AG04449 (cell line): ENCODE measurements at regions of chr7 and their contacts with region 1.

Region 1: DNA sequence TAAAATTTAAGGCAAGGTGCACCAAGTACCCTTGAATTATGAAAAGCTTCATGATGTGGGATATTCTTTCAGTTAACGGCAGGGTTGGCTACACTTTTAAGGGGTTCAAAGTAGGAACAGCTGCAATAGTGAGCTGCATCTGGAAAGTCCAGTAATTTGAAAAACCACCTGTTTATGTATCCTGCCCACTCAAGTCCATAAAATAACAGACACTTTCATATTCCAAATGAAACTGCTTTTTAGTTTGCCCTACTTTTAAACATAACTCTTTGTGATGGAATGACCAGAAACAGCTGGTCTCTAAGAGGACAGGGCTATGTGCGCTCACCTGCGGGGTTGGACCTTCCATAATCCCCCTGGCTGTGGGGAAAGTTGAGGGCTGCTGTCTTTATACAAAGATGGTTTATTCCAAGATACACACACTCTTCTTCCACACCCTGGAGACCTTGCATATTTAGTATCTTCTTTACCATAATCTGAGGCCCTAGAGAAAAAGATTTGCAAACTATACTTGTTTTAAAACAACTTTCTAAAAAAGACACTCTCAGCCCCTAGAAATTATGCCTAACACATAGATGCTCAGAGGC is 7.4 kb downstream of the CAV1 start:
- DNase-seq: no peak
- H3K4me3 ChIP-seq: peak overlapping the region; percentile 18
- CTCF ChIP-seq: no peak

Region 2: GRCh38 chr7:116518961-116519360 is 13.2 kb before region 1 on chr7:
- CTCF ChIA-PET with region 1: no interaction called
- POLR2A ChIA-PET with region 1: no interaction called
- DNase-seq: no peak
- H3K4me3 ChIP-seq: no peak overlapping the region
- CTCF ChIP-seq: no peak

Region 3: GRCh38 chr7:116547347-116547746 is 15.2 kb after region 1 on chr7:
- CTCF ChIA-PET with region 1: interaction called, 6 read pairs
- POLR2A ChIA-PET with region 1: interaction called, 10 read pairs
- DNase-seq: no peak
- H3K4me3 ChIP-seq: no peak overlapping the region
- CTCF ChIP-seq: no peak